AG04449 (cell line): ENCODE measurements at regions of chr19 and their contacts with region 1.

Region 1: DNA sequence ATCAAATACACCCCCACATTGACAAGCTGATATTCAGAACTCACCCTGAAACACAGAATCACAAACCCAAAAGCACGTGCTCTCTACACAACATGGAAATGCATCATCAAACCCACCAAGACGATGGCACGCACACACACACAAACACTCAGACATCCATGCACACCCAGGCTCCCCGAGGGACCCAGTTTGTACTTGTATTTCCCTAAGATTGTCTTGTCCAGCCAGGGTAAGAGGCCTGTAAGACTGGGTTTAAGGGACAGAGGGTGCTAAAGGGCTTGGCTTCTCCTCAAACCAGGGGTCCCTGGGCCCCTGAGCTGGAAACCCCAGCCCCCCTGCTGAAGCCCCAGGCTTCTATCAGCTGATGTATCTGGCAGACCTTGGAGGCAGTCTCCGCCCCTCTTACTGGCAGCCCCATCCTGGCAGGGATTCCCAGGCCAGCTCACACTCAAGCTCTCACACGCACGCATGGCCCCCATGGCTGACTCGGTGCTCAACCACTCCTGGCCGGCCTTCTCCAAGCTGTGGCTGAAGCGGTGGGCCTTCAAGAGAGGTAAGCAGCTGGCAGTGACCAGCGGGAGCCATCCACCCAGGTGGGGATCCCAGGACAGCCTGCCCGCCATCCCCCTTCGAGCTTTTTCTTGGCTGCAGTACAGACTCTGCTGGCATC is 6.5 kb downstream of the ARHGEF18 start:
- DNase-seq: no peak
- H3K4me3 ChIP-seq: no peak overlapping the region
- CTCF ChIP-seq: no peak

Region 2: DNA sequence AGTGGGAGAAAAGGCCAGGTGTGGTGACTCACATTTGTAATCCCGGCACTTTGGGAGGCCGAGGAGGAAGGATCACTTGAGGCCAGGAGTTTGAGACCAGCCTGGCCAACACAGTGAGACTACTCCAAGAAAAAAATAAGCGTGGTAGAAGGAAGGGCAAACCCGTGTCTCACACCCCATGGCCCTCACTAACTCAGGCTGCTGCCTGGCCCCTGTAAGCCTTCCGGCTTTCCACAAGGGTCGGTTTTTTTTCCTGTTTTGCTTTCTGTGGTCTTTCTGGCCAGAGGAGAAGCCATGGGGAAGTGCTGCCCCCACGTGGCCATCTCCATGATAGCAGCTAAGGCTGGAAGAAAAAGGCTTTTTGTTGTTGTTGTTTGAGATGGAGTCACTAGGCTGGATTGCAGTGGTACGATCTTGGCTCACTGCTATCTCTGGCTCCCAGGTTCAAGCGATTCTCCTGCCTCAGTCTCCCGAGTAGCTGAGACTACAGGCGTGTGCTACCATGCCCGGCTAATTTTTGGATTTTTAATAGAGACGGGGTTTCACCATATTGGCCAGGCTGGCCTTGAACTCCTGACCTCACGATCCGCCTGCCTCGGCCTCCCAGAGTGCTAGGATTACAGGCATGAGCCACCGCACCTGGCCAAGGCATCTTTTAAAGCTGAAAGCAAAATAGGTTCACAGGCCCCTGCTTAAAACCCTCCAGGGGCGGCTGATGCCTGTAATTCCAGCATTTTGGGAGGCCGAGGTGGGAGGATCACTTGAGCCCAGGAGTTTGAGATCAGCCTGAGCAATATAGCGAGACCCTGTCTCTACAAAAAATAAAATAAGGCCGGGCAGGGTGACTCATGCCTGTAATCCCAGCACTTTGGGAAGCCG is 14.1 kb before region 1 on chr19:
- CTCF ChIA-PET with region 1: interaction called, 27 read pairs
- POLR2A ChIA-PET with region 1: no interaction called
- DNase-seq: no peak
- H3K4me3 ChIP-seq: no peak overlapping the region
- CTCF ChIP-seq: peak; percentile 85

Region 3: DNA sequence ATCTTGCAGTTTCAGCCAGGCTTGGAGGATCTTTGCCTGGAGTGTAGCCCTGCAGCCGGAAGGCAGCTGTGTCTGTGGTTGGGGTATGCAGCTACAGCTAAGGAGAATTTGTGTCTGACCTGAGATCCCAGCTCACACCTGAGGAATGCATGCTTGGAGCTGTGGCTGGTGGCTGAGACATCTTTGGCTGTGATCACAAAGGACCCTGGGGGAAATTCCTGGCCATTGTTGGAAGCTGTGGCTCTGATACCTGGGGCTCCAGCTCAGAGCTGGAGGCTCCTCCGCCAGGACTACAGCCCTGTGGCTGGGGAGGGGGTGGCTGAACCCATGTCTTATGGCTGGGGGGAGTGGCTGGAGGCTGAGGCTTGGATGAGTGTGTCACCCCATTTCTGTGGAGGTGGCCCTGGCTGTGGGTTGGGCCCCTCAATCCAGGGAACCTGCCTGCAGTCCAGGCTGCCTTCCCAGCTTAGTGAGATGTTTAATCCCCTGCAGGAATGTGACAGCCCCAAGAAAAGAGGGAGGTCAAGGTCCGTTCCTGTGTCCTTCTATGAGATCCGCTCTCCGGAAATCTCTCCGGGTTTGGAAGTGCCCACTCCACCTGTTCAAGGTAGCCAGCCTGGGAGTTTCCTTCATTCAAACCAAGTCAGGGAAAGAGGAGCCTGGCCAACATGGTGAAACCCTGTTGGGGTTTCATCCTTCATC is 21.0 kb after region 1 on chr19:
- CTCF ChIA-PET with region 1: interaction called, 92 read pairs
- POLR2A ChIA-PET with region 1: no interaction called
- DNase-seq: no peak
- H3K4me3 ChIP-seq: no peak overlapping the region
- CTCF ChIP-seq: no peak

Region 4: GRCh38 chr19:7522072-7522922 is 167.0 kb after region 1 on chr19 and contains the start of gene MCOLN1:
- CTCF ChIA-PET with region 1: interaction called, 21 read pairs
- POLR2A ChIA-PET with region 1: no interaction called
- DNase-seq: peak; percentile 46
- H3K4me3 ChIP-seq: peak within 1 kb of the TSS; percentile 70
- CTCF ChIP-seq: no peak

Region 5: DNA sequence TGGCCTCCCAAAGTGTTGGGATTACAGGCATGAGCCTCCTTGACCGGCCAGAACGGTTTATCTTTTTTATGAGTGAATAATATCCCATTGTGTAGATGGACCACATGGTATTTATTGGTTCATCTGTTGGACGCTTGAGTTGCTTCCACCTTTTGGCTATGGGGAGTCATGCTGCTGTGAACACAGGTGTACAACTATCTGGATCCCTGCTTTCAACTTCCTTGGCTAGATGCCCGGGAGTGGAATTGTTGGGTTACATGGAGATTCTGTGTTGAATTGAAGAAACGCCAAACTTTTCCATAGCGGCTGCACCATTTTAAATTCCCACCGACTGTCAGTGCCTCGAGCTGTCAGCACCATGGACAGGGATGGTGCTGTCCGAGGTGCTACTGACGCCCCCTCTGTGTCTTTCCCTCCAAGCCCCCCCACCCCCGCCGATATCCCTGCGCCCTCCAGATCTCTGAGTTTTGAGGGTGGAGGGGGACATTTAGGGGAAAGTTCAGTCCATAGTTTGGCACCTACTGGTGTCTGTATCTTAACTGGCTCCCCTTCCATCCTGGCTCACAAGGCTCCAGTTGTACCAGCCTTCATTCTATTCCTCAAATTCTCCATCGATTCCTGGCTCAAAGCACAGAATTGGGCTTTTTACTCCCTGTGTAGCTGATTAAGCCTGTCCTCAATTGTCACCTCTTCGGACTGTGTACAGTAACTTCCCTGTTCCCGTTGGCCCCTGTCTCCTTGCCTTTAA is 207.5 kb after region 1 on chr19:
- CTCF ChIA-PET with region 1: interaction called, 13 read pairs
- POLR2A ChIA-PET with region 1: no interaction called
- DNase-seq: no peak
- H3K4me3 ChIP-seq: no peak overlapping the region
- CTCF ChIP-seq: no peak